A673 (cell line): ENCODE measurements at regions of chr1 and their contacts with region 1.

Region 1: GRCh38 chr1:236603991-236604904 is at the start of gene HEATR1:
- DNase-seq: peak; percentile 91
- H3K4me3 ChIP-seq: peak within 1 kb of the TSS; percentile 88
- H3K27ac ChIP-seq: peak within 1 kb of the TSS; percentile 76
- H3K4me1 ChIP-seq: peaks cover 7% of the 10 kb centered on the region
- H3K27me3 ChIP-seq: no peaks in the 10 kb centered on the region
- CTCF ChIP-seq: no peak
- total RNA-seq, gene HEATR1: 47.7 and 59.7 TPM in 2 replicates

Region 2: GRCh38 chr1:235821361-235821981 is 782.8 kb before region 1 on chr1:
- CTCF ChIA-PET with region 1: no interaction called
- POLR2A ChIA-PET with region 1: no interaction called
- intact Hi-C with region 1: no loop called
- DNase-seq: no peak
- H3K4me3 ChIP-seq: no peak overlapping the region
- H3K27ac ChIP-seq: no peak overlapping the region
- H3K4me1 ChIP-seq: no peaks in the 10 kb centered on the region
- H3K27me3 ChIP-seq: no peaks in the 10 kb centered on the region
- CTCF ChIP-seq: no peak

Region 3: DNA sequence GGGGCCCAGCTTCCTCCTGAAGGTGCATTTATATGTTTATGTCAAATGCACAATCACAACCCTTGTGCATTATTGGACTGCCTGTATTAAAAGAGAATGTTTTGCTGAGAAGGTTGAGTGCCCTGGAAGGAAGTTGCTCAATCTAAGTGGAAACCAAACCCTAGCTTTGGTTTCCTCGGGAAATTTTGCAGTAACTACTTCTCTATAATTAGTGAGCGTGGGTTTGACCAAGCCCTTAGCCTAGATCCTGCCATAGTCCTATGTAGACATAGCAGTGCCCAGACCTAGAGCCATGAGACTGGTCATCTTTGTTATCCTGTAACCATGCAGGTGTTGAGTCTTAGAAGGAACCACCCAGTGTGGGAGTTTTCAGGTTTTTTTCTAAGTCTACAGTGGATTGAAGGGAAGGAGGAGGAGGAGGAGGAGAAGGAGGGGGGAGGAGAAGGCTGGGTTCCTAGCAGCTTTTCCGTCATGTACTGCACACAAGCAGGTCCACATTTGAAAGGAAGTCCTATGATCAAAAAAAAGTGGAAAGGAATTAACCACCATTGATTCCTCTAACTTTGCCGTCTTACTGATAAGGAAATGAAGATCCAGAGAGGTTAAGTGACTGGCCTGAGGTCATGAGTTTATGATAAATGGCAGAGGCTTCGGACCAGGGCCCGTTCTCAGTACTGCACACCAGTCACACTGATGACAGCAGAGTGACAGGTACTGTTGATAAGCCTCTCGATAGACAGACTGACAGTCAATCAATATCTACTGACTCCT is 665.4 kb before region 1 on chr1:
- CTCF ChIA-PET with region 1: no interaction called
- POLR2A ChIA-PET with region 1: no interaction called
- intact Hi-C with region 1: no loop called
- DNase-seq: no peak
- H3K4me3 ChIP-seq: no peak overlapping the region
- H3K27ac ChIP-seq: no peak overlapping the region
- H3K4me1 ChIP-seq: no peaks in the 10 kb centered on the region
- H3K27me3 ChIP-seq: no peaks in the 10 kb centered on the region
- CTCF ChIP-seq: no peak

Region 4: DNA sequence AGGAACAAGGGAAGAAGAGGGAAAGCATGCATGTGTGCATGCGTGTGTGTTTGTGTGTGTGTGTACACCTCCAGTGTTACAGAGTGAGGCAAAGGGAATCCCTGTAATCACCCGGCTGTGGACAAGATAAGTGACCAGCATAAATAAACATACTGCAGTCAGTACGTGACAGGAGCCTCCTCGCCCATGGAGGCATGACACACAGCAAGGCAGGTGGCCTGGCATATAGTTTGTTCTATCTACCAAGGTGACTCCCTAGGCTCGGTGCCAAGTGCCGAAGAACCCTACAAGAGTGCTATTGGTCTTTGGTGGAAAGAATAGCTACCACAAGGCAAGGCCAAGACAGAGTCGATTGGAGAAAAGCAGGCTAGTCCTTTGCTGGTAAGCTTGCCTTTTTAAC is 31.8 kb after region 1 on chr1:
- CTCF ChIA-PET with region 1: no interaction called
- POLR2A ChIA-PET with region 1: no interaction called
- intact Hi-C with region 1: no loop called
- DNase-seq: no peak
- H3K4me3 ChIP-seq: no peak overlapping the region
- H3K27ac ChIP-seq: no peak overlapping the region
- H3K4me1 ChIP-seq: no peaks in the 10 kb centered on the region
- H3K27me3 ChIP-seq: no peaks in the 10 kb centered on the region
- CTCF ChIP-seq: no peak

Region 5: GRCh38 chr1:236659792-236660587 is 55.7 kb after region 1 on chr1:
- CTCF ChIA-PET with region 1: no interaction called
- POLR2A ChIA-PET with region 1: interaction called, 10 read pairs
- intact Hi-C with region 1: no loop called
- DNase-seq: no peak
- H3K4me3 ChIP-seq: no peak overlapping the region
- H3K27ac ChIP-seq: no peak overlapping the region
- H3K4me1 ChIP-seq: peaks cover 15% of the 10 kb centered on the region
- H3K27me3 ChIP-seq: no peaks in the 10 kb centered on the region
- CTCF ChIP-seq: no peak

Region 6: DNA sequence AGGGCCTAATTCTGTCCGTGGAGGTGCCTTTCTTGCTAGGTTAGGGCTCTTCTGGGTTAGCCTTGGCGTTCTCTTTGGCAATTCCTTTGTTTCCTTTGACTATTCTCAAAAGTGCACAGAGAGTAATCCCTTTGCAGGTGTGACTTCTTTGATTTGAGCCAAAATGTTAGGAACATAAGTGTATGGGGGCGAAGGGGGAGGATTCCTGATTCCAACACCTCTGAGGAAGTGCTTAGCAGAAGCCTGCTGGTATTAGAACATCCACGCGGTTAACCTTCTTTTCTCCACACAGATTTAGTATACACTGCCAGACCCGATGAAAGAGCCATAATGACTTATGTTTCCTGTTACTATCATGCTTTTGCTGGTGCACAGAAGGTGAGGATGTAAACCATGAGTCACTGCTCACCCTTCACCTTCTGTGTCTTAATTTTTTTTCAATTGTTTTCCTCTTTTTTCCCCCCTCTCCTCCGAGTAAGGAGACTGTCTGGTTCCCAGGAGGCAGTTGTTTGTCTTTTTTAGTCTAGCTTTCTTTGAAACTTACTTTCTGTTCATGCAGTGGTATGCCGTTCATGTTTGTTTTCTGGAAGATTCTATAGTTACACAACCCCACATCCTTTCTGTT is 130.0 kb after region 1 on chr1:
- CTCF ChIA-PET with region 1: no interaction called
- POLR2A ChIA-PET with region 1: no interaction called
- intact Hi-C with region 1: loop called (anchors 10 kb)
- DNase-seq: peak; percentile 15
- H3K4me3 ChIP-seq: no peak overlapping the region
- H3K27ac ChIP-seq: peak overlapping the region; percentile 54
- H3K4me1 ChIP-seq: no peaks in the 10 kb centered on the region
- H3K27me3 ChIP-seq: no peaks in the 10 kb centered on the region
- CTCF ChIP-seq: no peak

Region 7: GRCh38 chr1:236753516-236753915 is 149.3 kb after region 1 on chr1:
- CTCF ChIA-PET with region 1: no interaction called
- POLR2A ChIA-PET with region 1: no interaction called
- intact Hi-C with region 1: loop called (anchors 5 kb)
- DNase-seq: peak; percentile 27
- H3K4me3 ChIP-seq: no peak overlapping the region
- H3K27ac ChIP-seq: no peak overlapping the region
- H3K4me1 ChIP-seq: no peaks in the 10 kb centered on the region
- H3K27me3 ChIP-seq: no peaks in the 10 kb centered on the region
- CTCF ChIP-seq: peak; percentile 30; the same call in 1 of the 2 replicates

Region 8: GRCh38 chr1:236868625-236869467 is 264.6 kb after region 1 on chr1:
- CTCF ChIA-PET with region 1: no interaction called
- POLR2A ChIA-PET with region 1: no interaction called
- intact Hi-C with region 1: loop called (anchors 1 kb)
- DNase-seq: peak; percentile 54
- H3K4me3 ChIP-seq: no peak overlapping the region
- H3K27ac ChIP-seq: no peak overlapping the region
- H3K4me1 ChIP-seq: no peaks in the 10 kb centered on the region
- H3K27me3 ChIP-seq: no peaks in the 10 kb centered on the region
- CTCF ChIP-seq: peak; percentile 75

Region 9: DNA sequence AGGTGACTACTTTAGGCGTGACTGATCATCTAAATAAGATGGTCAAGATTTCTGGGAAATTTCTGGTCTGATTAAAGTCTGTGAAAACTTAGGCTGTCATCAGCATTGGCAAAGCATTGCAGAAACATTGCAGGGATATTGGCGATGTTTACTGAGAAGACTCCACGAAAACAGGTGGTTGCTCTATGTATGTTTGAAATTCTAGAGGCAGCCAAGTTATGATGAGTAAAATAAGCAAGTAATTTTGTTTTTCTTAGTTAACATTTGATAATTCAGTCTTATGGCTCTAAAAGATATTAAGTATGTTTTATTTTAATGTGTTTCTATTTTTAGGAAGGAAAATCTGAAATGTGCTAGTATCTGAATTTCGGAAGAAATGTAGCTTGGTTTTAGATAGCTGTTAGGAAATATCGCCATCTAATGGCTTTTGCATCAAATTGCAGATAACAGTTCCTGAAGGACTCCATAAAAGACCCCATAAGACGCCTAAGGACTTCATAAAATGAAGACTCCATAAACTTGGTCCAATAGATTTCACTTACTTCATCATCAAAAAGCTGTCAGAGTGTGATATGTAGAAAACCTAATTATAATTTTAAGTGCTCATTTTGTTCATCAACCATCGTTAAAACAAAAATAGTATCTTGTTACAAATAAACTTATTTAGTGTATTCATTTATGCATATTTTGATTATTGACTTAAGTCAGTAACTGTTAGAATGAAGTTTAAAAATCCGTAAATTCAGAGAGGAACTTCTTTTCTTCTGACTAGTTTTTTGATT is 782.3 kb after region 1 on chr1:
- CTCF ChIA-PET with region 1: no interaction called
- POLR2A ChIA-PET with region 1: no interaction called
- intact Hi-C with region 1: loop called (anchors 10 kb)
- DNase-seq: peak; percentile 35
- H3K4me3 ChIP-seq: no peak overlapping the region
- H3K27ac ChIP-seq: no peak overlapping the region
- H3K4me1 ChIP-seq: no peaks in the 10 kb centered on the region
- H3K27me3 ChIP-seq: no peaks in the 10 kb centered on the region
- CTCF ChIP-seq: peak; percentile 64

Region 10: DNA sequence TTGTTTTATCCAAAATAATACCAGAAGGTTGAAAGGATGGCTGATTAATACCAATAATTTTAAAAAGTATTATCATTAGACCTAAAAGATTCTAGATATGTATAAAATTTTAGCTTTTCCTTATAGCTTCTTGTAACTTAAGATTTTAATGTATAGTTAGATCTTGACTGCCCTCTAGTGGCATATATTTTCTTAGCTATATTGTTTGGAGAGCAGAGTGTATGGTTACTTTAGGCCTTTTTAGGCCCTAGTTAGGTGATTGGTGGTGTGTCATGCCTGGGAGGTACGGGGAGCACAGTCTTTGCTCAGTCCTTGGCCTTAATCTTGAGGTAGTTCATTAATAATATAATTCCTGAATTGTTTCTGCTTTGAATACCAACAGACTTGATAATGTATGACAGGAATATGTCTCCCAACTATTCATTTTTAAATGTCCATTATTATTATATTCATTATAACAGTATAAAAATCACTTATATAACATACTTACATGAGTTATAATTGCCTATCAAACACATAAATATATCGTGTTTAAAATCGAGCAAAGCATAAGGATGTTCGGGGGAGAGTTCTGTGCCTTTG is 958.1 kb after region 1 on chr1:
- CTCF ChIA-PET with region 1: no interaction called
- POLR2A ChIA-PET with region 1: no interaction called
- intact Hi-C with region 1: loop called (anchors 10 kb)
- DNase-seq: peak; percentile 71
- H3K4me3 ChIP-seq: no peak overlapping the region
- H3K27ac ChIP-seq: no peak overlapping the region
- H3K4me1 ChIP-seq: no peaks in the 10 kb centered on the region
- H3K27me3 ChIP-seq: no peaks in the 10 kb centered on the region
- CTCF ChIP-seq: peak; percentile 55